Dendritic cell treated with granulocyte-macrophage colony-stimulating factor and Interleukin-4, amounts not matched to agents 40 ng/mL and 50 ng/mL, for 4 days (primary cell): ENCODE measurements at regions of chr5 and their contacts with region 1.

Region 1: GRCh38 chr5:76582230-76583162 is 40.7 kb downstream of the F2RL2 start:
- H3K4me3 Mint-ChIP-seq: no peak overlapping the region
- H3K27ac Mint-ChIP-seq: peak overlapping the region; percentile 79
- H3K4me1 Mint-ChIP-seq: peaks cover 42% of the 10 kb centered on the region
- H3K27me3 Mint-ChIP-seq: no peaks in the 10 kb centered on the region

Region 2: GRCh38 chr5:76180814-76181805 is 401.4 kb before region 1 on chr5:
- intact Hi-C with region 1: no loop called
- H3K4me3 Mint-ChIP-seq: no peak overlapping the region
- H3K27ac Mint-ChIP-seq: no peak overlapping the region
- H3K4me1 Mint-ChIP-seq: peaks cover 7% of the 10 kb centered on the region
- H3K27me3 Mint-ChIP-seq: no peaks in the 10 kb centered on the region

Region 3: GRCh38 chr5:76473661-76474060 is 108.8 kb before region 1 on chr5:
- intact Hi-C with region 1: loop called (anchors 10 kb)
- H3K4me3 Mint-ChIP-seq: no peak overlapping the region
- H3K27ac Mint-ChIP-seq: no peak overlapping the region
- H3K4me1 Mint-ChIP-seq: peaks cover 61% of the 10 kb centered on the region
- H3K27me3 Mint-ChIP-seq: no peaks in the 10 kb centered on the region

Region 4: DNA sequence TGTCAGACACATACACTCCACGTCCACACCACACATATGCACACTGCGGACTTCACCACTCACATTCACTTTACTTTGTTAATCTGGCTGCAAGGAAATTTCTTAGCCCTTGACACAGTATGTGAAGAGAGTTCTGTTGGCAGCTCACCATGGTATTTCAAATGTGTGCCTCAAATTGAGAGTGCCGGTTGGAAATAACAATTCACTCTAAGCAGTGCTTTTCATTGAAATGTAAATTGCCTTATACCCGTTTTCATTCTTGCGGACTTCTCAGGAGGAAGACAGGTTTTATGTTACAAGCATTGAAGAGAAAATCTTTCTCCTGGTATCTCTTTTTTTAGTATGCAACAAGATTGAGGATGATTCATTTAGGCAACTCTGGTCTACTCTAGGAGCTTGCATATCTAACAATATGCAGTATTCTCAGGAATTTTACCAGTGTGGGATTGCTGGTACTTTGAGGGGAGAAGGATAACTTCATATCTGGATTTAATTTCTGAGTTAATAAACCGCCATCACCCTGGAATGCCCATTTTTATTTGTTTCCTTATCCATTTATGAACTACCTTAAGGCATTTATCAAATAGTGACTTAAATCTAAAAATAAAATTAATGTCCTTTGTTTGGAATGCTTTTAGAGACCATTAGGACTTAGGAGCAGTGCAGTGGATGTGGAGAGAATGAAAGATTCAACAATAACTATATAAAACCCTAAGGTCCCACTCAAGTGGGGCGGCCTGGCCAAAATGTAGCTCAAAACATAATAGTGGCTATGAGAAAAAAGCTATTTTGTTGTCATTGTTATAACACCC is 92.4 kb before region 1 on chr5:
- intact Hi-C with region 1: no loop called
- H3K4me3 Mint-ChIP-seq: no peak overlapping the region
- H3K27ac Mint-ChIP-seq: no peak overlapping the region
- H3K4me1 Mint-ChIP-seq: peaks cover 22% of the 10 kb centered on the region
- H3K27me3 Mint-ChIP-seq: no peaks in the 10 kb centered on the region

Region 5: DNA sequence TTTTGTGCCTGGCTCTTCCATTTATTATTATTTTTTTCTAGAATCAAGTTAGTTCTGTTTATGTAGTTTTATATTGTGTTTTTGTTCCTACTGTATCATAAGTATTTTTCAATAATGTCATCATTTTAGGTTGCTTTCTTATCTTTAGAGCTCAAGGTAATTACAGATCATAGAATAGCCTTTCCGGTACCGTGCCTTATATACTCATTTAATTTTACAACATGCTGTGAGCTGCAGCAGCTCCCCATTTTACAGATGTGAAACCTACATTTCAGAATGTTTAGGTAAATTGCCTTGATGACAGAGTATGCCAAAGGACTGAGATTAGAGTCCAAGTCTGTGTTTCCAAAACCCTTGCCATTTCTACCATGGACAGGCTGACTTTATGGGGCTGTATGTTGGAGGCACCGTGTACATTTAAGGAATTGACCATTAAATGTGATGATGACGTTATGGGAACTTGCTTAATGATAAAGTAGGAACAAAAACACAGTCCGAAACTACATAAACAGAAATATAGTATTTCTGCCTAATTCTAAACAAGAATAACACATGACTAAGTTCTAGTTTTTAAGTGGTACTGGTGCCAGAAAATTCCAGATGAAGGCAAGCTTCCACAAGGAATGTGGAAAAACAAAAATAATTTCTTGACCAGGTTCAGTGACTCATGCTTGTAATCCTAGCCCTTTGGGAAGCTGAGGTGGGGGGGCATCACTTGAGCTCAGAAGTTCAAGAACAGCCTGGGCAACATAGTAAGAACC is 81.7 kb before region 1 on chr5:
- intact Hi-C with region 1: no loop called
- H3K4me3 Mint-ChIP-seq: no peak overlapping the region
- H3K27ac Mint-ChIP-seq: no peak overlapping the region
- H3K4me1 Mint-ChIP-seq: peaks cover 47% of the 10 kb centered on the region
- H3K27me3 Mint-ChIP-seq: no peaks in the 10 kb centered on the region

Region 6: GRCh38 chr5:76547242-76547890 is 35.1 kb before region 1 on chr5:
- intact Hi-C with region 1: loop called (anchors 2 kb)
- H3K4me3 Mint-ChIP-seq: peak overlapping the region; percentile 66
- H3K27ac Mint-ChIP-seq: peak overlapping the region; percentile 92
- H3K4me1 Mint-ChIP-seq: peaks cover 86% of the 10 kb centered on the region
- H3K27me3 Mint-ChIP-seq: no peaks in the 10 kb centered on the region

Region 7: DNA sequence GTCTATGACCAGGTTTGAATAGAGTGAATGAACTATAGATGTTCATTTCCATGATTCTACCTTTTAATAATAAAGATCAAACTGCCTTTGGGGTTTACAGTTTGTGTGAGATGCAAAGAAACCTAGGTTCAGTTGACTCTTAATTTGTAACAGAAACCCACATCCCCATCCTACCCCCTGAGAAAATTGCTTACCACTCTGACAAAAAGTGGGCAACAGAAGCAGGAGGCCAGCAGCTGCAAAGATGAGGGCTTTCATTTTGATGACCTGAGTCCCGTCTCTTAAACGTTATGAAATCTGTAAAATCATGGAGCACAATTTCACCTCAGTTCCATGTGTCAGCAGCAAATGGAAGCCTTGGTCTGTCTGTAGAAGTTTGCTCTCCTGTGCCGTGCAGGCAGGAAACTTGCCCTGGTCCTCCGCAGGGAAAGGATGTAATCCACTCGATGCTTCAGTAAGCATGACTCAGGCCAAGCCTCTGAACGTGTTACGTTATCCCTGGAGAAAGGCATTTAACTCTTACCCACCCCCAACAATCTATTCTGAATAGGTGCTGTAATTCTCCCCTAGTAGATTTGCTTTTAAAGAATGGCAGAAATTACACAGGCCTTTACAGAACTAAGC is 40.6 kb after region 1 on chr5 and contains the start of gene F2RL2:
- intact Hi-C with region 1: no loop called
- H3K4me3 Mint-ChIP-seq: no peak within 1 kb of the TSS
- H3K27ac Mint-ChIP-seq: no peak within 1 kb of the TSS
- H3K4me1 Mint-ChIP-seq: peaks cover 35% of the 10 kb centered on the region
- H3K27me3 Mint-ChIP-seq: no peaks in the 10 kb centered on the region